ENCODE measurements at regions of chr2 and their contacts with region 1.

Region 1: GRCh38 chr2:232611551-232612218 is 21.7 kb upstream of the EFHD1 start:
- DNase-seq: peak in 1 of 2 donors; percentile 84
- H3K4me3 ChIP-seq: no peak overlapping the region
- H3K27ac ChIP-seq: peak overlapping the region in 1 of 2 donors; percentile 27
- H3K4me1 ChIP-seq: no peaks in the 10 kb centered on the region
- H3K27me3 ChIP-seq: no peaks in the 10 kb centered on the region
- CTCF ChIP-seq: peak; percentile 79 to 92 (median 89)

Region 2: DNA sequence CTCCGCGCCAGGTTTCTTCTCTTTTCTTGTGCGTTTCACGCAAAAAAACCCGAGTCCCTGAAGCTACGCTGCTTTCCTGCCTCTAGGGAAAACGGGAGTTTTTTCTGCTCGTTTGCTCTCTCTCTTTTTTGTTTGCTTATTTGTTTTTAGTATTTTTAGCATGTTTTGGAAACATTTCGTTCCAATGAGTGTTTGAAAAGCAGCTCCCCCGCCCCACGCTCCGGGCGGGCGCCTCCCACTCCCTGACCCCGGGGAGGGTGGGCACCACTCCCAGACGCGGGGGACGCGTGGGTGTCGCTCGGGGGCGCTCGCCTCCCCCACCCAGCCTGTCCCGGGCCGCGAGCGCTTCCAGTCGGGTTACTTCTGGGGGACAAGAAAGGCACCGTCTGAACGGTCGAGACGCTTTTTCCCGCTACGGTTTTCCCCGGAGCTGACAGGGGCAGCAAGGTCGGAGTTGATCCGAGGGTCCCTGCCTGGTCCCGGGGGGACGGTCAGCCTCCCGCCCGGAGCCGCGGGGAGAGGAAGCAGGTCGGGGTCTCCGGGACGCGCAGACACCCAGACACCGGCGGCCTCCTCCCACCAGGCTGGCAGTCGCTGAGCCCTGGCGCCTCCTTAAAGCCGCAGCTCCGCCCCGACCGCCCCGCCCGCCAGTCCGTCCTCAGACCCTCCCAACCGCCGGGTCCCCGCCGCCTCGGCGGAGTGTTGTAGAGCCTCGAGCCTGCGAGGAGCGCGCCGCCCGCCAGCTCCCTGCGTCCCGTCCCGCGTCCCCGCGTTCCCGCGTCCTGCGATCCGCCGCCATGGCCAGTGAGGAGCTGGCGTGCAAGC is 21.4 kb after region 1 on chr2 and contains the start of gene EFHD1:
- intact Hi-C with region 1: loop called (anchors 1 kb)
- DNase-seq: peak; percentile 39 to 93
- H3K4me3 ChIP-seq: peak within 1 kb of the TSS; percentile 78 to 92
- H3K27ac ChIP-seq: peak within 1 kb of the TSS; percentile 90 to 99
- H3K4me1 ChIP-seq: peaks cover 0 to 29% of the 10 kb centered on the region in 2 donors
- H3K27me3 ChIP-seq: no peaks in the 10 kb centered on the region
- CTCF ChIP-seq: no peak
- total RNA-seq, gene EFHD1: 142 TPM

Region 3: DNA sequence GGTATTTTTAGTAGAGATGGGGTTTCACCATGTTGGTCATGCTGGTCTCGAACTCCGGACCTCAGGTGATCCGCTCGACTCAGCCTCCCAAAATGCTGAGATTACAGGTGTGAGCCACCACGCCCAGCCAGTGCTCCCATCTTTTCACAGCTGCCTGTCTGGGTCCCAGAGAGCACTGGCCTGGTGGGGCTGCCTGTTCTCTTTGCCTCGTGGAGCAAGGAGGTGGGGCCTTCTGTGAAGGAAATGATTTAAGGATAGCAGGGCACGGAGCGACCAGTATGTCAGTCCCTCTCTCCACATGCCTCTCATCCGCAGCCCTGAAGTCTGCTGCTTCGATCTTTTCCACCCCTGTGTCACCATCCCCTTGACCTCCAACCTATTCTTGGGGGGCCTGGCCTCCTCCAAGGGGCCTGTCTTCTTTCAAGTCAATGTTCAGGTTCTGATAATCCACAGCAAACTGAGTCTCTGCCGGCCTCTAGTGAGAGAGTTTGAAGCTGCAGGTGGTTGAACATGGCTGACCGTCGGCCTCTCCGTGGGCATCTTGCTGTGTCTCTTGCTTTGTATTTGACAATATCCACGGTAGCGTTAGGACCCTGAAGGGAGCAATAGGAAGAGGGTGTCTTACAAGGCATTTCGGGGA is 57.2 kb after region 1 on chr2:
- intact Hi-C with region 1: loop called (anchors 1 kb)
- DNase-seq: no peak
- H3K4me3 ChIP-seq: peak overlapping the region in 1 of 2 donors; percentile 31
- H3K27ac ChIP-seq: peak overlapping the region; percentile 66 to 85
- H3K4me1 ChIP-seq: peaks cover 9 to 32% of the 10 kb centered on the region in 2 donors
- H3K27me3 ChIP-seq: no peaks in the 10 kb centered on the region
- CTCF ChIP-seq: peak; percentile 56 to 75 (median 61)

Measured in ascending aorta (tissue), 2 donors.